CD8-positive, alpha-beta T cell (primary cell): ENCODE measurements at regions of chr12 and their contacts with region 1.

Region 1: DNA sequence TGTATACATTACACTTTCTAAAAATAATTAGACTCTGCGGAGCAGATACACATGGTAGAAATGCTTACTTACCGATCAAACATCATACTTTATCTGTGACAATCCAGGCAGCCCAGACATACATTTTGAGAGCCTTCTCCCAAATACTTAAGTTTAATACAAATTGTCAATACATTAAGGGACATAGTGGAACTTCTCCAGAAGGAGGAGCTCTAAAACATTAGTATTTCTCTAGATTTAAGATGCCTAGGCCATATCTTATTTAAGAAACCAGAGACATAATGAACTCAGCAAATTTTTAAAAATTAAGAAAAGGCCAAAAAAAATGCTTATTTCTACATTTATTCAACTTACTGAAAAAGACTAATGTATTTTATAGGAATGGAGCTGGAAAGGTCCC is 16.1 kb downstream of the ACSM4 start:
- DNase-seq: peak in 1 of 9 experiments; percentile 9
- ATAC-seq: no peak
- H3K4me3 ChIP-seq: no peak overlapping the region
- H3K4me3 Mint-ChIP-seq: no peak overlapping the region
- H3K27ac ChIP-seq: no peak overlapping the region
- H3K27ac Mint-ChIP-seq: no peak overlapping the region
- H3K4me1 ChIP-seq: no peaks in the 10 kb centered on the region
- H3K4me1 Mint-ChIP-seq: no peaks in the 10 kb centered on the region
- H3K27me3 ChIP-seq: no peaks in the 10 kb centered on the region
- H3K27me3 Mint-ChIP-seq: peaks cover under 1% of the 10 kb centered on the region
- CTCF ChIP-seq: no peak

Region 2: GRCh38 chr12:7450665-7451064 is 130.7 kb after region 1 on chr12:
- CTCF ChIA-PET with region 1: no interaction called
- POLR2A ChIA-PET with region 1: no interaction called
- intact Hi-C with region 1: loop called in 1 of 2 experiments (anchors 10 kb)
- DNase-seq: no peak
- ATAC-seq: no peak
- H3K4me3 ChIP-seq: no peak overlapping the region
- H3K4me3 Mint-ChIP-seq: no peak overlapping the region
- H3K27ac ChIP-seq: no peak overlapping the region
- H3K27ac Mint-ChIP-seq: no peak overlapping the region
- H3K4me1 ChIP-seq: no peaks in the 10 kb centered on the region
- H3K4me1 Mint-ChIP-seq: no peaks in the 10 kb centered on the region
- H3K27me3 ChIP-seq: no peaks in the 10 kb centered on the region
- H3K27me3 Mint-ChIP-seq: peaks cover 2% of the 10 kb centered on the region
- CTCF ChIP-seq: no peak

Region 3: GRCh38 chr12:8609061-8609570 is 1289.2 kb after region 1 on chr12:
- CTCF ChIA-PET with region 1: no interaction called
- POLR2A ChIA-PET with region 1: no interaction called
- intact Hi-C with region 1: no loop called
- DNase-seq: peak in 2 of 9 experiments; percentile 20 to 28
- ATAC-seq: no peak
- H3K4me3 ChIP-seq: no peak overlapping the region
- H3K4me3 Mint-ChIP-seq: peak overlapping the region; percentile 59
- H3K27ac ChIP-seq: no peak overlapping the region
- H3K27ac Mint-ChIP-seq: no peak overlapping the region
- H3K4me1 ChIP-seq: no peaks in the 10 kb centered on the region
- H3K4me1 Mint-ChIP-seq: peaks cover 11% of the 10 kb centered on the region
- H3K27me3 ChIP-seq: no peaks in the 10 kb centered on the region
- H3K27me3 Mint-ChIP-seq: peaks cover 6% of the 10 kb centered on the region
- CTCF ChIP-seq: peak; percentile 53